ENCODE measurements at regions of chr9 and their contacts with region 1.

Region 1: DNA sequence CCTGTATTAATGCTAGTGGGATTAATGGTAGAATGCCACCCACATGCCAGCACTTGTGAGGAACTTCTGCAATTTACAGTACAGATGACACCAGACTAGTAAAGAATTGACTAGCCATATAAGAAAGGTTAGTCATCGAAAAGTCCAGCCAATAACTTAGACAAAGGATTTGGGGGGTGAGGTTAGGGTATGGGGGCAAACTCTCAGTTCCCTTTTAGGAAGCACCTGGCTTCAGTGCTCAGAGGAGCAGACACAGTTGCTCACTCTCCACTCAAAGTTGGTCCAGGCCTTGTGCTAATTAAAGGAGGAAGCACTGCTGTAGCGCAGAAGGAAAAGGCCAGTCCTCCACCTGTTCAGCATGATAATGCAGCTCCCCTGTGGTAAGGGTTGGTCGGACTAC is 25.2 kb downstream of the TGFBR1 start:
- DNase-seq: peak; percentile 82
- ATAC-seq: peak; percentile 96
- H3K4me3 ChIP-seq: no peak overlapping the region
- H3K4me3 Mint-ChIP-seq: peak overlapping the region; percentile 15
- H3K27ac ChIP-seq: peak overlapping the region in 1 of 2 donors; percentile 28
- H3K27ac Mint-ChIP-seq: peak overlapping the region; percentile 71
- H3K4me1 ChIP-seq: peaks cover 24 to 27% of the 10 kb centered on the region in 2 donors
- H3K4me1 Mint-ChIP-seq: peaks cover 64% of the 10 kb centered on the region
- H3K27me3 ChIP-seq: no peaks in the 10 kb centered on the region
- H3K27me3 Mint-ChIP-seq: no peaks in the 10 kb centered on the region
- CTCF ChIP-seq: no peak

Region 2: DNA sequence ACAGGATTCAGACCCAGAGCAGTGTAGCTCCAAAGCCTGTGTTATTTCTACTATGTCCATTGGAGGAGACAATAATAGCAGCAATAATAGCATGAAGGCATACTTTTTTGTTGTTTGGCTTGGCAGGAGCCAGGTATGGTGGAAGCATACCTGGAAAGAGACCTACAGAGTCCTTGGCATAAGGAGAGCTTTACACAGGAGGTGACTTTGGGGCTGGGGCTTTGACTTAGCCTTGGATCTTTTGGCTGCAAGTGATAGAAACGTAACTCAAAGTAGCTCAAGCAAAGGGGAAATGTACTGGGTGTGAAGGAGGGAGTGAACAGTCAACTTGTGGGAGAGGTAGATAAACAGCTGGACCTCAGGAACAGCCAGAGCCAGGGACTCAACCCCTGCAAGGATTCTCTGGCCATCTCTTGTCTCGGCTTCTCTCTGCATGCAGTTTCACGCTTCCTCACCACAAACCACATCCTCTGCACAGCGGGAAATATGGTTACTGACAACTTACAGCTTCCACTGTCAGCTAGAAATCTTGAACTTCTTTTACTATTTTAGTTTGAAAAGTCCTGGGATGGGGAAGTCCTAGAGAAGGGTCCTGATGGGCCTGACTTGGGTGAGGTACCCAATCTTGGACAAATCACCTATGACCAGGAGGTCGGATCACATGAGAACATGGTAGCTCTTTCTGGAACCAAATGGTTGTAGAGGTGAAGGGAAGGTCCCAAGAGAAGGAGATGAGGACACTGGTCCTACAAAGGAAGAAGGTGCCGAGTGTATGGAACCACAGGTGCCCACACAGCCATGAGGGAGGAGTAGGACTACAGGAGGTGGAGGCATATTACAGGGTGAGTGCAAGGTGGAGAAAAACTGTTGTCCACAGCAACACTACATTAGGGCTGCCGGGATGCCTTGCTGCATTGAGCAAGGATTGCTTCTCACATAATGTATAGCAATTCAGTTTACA is 72.1 kb before region 1 on chr9:
- CTCF ChIA-PET with region 1: interaction called, 4 read pairs
- POLR2A ChIA-PET with region 1: no interaction called
- intact Hi-C with region 1: loop called (anchors 2 kb)
- DNase-seq: peak; percentile 72
- ATAC-seq: peak; percentile 52
- H3K4me3 ChIP-seq: peak overlapping the region; percentile 13 to 55 (median 23)
- H3K4me3 Mint-ChIP-seq: peak overlapping the region; percentile 86
- H3K27ac ChIP-seq: peak overlapping the region; percentile 57 to 75
- H3K27ac Mint-ChIP-seq: peak overlapping the region; percentile 88
- H3K4me1 ChIP-seq: peaks cover 54 to 66% of the 10 kb centered on the region in 2 donors
- H3K4me1 Mint-ChIP-seq: peaks cover 64% of the 10 kb centered on the region
- H3K27me3 ChIP-seq: no peaks in the 10 kb centered on the region
- H3K27me3 Mint-ChIP-seq: no peaks in the 10 kb centered on the region
- CTCF ChIP-seq: no peak

Region 3: GRCh38 chr9:99104459-99105151 is 25.5 kb before region 1 on chr9 and contains the start of gene TGFBR1:
- CTCF ChIA-PET with region 1: interaction called, 82 read pairs
- POLR2A ChIA-PET with region 1: interaction called, 3 read pairs
- intact Hi-C with region 1: loop called (anchors 1 kb)
- DNase-seq: peak; percentile 96
- ATAC-seq: peak; percentile 83
- H3K4me3 ChIP-seq: peak within 1 kb of the TSS; percentile 64 to 87 (median 79)
- H3K4me3 Mint-ChIP-seq: peak within 1 kb of the TSS; percentile 97
- H3K27ac ChIP-seq: peak within 1 kb of the TSS; percentile 16 to 74
- H3K27ac Mint-ChIP-seq: peak within 1 kb of the TSS; percentile 89
- H3K4me1 ChIP-seq: peaks cover 40 to 44% of the 10 kb centered on the region in 2 donors
- H3K4me1 Mint-ChIP-seq: peaks cover 48% of the 10 kb centered on the region
- H3K27me3 ChIP-seq: no peaks in the 10 kb centered on the region
- H3K27me3 Mint-ChIP-seq: no peaks in the 10 kb centered on the region
- CTCF ChIP-seq: no peak
- total RNA-seq, gene TGFBR1: 60.7 TPM in 2 replicates

Region 4: GRCh38 chr9:99118782-99119466 is 11.1 kb before region 1 on chr9:
- CTCF ChIA-PET with region 1: interaction called, 3 read pairs
- POLR2A ChIA-PET with region 1: no interaction called
- intact Hi-C with region 1: loop called (anchors 1 kb)
- DNase-seq: peak; percentile 73
- ATAC-seq: peak; percentile 91
- H3K4me3 ChIP-seq: peak overlapping the region; percentile 3 to 57 (median 45)
- H3K4me3 Mint-ChIP-seq: peak overlapping the region; percentile 59
- H3K27ac ChIP-seq: peak overlapping the region; percentile 21 to 73
- H3K27ac Mint-ChIP-seq: peak overlapping the region; percentile 88
- H3K4me1 ChIP-seq: peaks cover 36 to 43% of the 10 kb centered on the region in 2 donors
- H3K4me1 Mint-ChIP-seq: peaks cover 71% of the 10 kb centered on the region
- H3K27me3 ChIP-seq: no peaks in the 10 kb centered on the region
- H3K27me3 Mint-ChIP-seq: no peaks in the 10 kb centered on the region
- CTCF ChIP-seq: no peak

Measured in B cell (primary cell).